ENCODE measurements at regions of chr4 and their contacts with region 1.

Region 1: GRCh38 chr4:92198711-92199110 is 105.1 kb upstream of the GRID2 start:
- DNase-seq: no peak
- H3K4me3 ChIP-seq: no peak overlapping the region
- H3K27ac ChIP-seq: no peak overlapping the region
- H3K4me1 ChIP-seq: no peaks in the 10 kb centered on the region
- CTCF ChIP-seq: no peak

Region 2: DNA sequence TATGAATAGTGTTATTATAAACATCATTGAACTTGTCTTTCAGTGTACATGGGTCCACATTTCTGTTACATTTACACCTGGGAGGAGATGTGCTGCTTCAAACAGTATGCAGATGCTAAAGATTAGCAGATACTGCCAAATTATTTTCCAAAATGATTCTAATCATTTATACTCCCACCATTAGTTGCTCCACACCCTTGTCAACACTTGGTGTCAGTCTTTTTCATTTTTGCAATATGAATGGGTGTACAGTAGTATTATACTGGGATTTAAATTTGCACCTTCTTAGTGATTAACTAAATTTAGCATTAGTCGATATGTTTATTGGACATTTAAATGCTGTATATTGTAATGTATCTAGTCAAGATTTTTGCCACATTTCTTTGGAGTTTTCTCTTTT is 26.5 kb before region 1 on chr4:
- CTCF ChIA-PET with region 1: no interaction called
- POLR2A ChIA-PET with region 1: no interaction called
- intact Hi-C with region 1: no loop called
- DNase-seq: no peak
- H3K4me3 ChIP-seq: no peak overlapping the region
- H3K27ac ChIP-seq: no peak overlapping the region
- H3K4me1 ChIP-seq: no peaks in the 10 kb centered on the region
- CTCF ChIP-seq: no peak

Region 3: DNA sequence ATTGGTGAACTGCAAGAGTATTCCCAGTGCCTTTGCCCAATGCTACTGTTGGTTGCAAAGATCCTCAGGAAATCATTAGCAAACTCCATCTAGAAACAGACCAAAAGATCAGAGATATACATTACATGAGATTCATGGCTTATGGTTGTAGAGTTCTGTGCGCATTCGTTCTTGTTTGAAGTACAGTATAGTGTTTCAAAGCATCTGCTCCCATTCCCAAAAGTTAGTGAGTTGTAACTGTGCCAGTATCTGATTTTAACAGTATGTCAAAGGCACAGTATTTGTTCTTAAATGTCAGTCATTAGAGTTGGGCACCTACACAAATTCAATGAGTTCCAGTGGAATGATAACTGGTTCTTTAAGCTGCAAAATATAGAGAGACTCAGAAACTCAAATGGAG is 1315.1 kb after region 1 on chr4:
- CTCF ChIA-PET with region 1: no interaction called
- POLR2A ChIA-PET with region 1: no interaction called
- intact Hi-C with region 1: loop called (anchors 5 kb)
- DNase-seq: no peak
- H3K4me3 ChIP-seq: no peak overlapping the region
- H3K27ac ChIP-seq: no peak overlapping the region
- H3K4me1 ChIP-seq: no peaks in the 10 kb centered on the region
- CTCF ChIP-seq: no peak